Right ventricle myocardium inferior (tissue), 1 donor: ENCODE measurements at regions of chr20 and their contacts with region 1.

Region 1: DNA sequence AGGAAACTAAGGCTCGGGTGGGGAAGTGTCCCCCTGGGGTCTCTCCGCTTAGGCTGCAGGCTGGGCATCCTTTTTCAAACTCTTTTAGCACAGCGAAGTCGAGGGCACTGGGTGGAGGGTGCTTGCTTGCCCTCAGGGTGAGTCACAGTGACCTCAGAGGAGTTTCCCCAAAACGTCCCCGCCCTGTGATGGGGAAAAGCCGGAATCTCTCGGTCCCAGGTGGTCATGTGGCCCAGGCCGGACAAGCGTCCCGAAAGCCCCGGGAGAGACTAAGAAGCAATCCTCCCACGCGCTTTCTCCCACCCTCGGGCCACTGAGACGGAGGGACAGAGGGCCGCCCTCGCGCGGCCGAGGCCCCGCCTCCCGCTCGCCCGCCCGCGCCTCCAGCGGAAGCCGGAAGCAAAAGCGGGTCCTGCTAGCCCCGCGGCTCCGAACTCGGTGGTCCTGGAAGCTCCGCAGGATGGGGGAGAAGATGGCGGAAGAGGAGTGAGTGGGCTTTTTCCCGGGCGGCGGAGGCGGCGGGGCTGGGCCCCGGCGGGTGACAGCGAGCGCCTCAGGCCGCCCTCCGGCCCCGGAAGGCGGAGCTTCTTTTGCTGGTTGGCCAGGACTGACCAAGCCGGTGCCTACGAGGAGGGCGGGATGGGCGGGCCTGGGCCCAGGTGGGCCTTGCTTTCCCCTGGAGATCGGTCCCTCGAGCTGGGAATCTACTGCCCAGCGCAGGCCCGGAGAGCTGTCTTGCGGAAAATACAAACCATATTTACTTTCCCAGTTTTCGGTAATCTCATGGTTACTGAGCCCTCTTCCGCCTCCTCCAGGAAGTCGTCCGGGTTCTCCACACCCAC is at the start of gene SLC9A8:
- DNase-seq: peak; percentile 92
- ATAC-seq: peak; percentile 97
- total RNA-seq, gene SLC9A8: 4.7 TPM

Region 2: GRCh38 chr20:49631061-49631788 is 181.5 kb before region 1 on chr20:
- intact Hi-C with region 1: loop called (anchors 5 kb)
- DNase-seq: no peak
- ATAC-seq: peak; percentile 30

Region 3: GRCh38 chr20:49713753-49714712 is 98.7 kb before region 1 on chr20 and contains the start of gene B4GALT5:
- intact Hi-C with region 1: loop called (anchors 2 kb)
- DNase-seq: peak; percentile 83
- ATAC-seq: peak; percentile 87
- total RNA-seq, gene B4GALT5: 44.0 TPM

Region 4: GRCh38 chr20:49768204-49769047 is 44.3 kb before region 1 on chr20:
- intact Hi-C with region 1: no loop called
- DNase-seq: no peak
- ATAC-seq: peak; percentile 52

Region 5: GRCh38 chr20:49888345-49888966 is 75.8 kb after region 1 on chr20:
- intact Hi-C with region 1: no loop called
- DNase-seq: peak; percentile 64
- ATAC-seq: no peak

Region 6: DNA sequence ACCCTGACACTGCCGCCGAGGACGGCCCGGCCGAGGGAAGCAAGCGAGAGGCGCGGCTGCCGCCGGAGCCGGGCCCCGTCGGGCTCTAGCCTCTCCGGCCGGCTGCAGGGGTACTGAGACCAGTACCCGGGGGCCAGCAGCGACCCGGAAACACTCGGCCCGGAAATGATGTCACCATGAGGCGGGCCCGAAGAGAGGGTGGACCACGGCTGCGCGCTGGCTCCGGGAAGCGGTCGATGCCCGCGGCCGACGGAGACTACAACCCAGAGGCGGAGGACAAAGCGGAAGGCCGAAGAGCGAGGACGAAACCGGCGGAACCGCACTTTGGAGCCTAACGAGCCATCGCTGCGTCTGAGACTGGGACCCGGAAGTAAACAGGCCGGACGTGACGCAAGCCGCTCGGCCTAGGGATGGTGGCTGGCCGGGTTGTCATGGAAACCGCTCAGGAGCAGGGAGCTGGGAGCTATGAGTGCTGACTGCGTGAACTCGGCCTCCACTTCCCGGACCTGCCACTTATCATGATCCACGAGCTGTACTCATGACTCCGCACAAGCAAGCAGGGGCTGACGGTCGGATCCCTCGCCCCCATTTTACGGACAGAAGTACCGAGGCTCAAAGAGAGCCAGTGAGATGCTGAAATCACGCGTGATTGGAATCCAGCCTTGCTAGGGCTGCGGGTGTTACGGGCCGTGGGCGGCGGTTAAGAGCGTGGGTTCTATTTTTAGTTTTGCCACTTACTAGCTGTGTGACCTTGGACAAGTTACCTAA is 102.9 kb after region 1 on chr20 and contains the start of gene SPATA2:
- intact Hi-C with region 1: loop called (anchors 5 kb)
- DNase-seq: peak; percentile 99
- ATAC-seq: peak; percentile 94
- total RNA-seq, gene SPATA2: 8.0 TPM

Region 7: DNA sequence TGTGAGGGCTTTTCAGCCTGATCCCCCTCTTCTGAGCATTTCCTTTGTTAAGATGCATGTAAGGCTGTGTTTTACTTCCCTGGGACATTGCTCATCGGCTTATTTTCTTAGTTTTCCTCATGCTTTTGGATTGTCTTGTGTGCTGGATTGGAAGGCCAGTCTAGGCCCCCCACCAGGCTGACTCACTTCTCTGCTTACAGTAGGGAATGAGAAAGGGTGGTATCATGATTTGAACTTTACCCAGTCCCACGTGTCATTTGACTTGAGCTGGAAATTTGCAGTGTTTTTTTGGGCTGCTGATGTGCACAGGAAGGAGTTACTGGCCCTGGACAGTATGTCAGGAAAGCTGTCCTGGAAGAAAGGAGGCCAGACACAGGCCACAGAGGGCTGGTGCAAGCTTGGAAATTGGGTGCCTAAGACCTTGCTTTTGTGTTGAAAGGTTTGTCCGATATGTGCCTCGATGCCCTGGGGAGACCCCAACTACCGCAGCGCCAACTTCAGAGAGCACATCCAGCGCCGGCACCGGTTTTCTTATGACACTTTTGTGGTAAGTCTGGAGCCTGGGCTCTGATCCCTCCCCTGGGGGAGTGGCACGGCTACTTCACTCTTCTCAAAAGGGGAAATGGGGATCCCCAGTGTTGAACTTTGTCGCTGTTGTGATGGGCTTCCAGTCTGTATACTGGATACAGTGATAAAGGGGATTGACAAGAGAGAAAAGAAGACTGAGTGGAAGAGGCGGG is 136.3 kb after region 1 on chr20:
- intact Hi-C with region 1: no loop called
- DNase-seq: no peak
- ATAC-seq: no peak